Pancreas (tissue), 10 donors: ENCODE measurements at regions of chr1 and their contacts with region 1.

Region 1: DNA sequence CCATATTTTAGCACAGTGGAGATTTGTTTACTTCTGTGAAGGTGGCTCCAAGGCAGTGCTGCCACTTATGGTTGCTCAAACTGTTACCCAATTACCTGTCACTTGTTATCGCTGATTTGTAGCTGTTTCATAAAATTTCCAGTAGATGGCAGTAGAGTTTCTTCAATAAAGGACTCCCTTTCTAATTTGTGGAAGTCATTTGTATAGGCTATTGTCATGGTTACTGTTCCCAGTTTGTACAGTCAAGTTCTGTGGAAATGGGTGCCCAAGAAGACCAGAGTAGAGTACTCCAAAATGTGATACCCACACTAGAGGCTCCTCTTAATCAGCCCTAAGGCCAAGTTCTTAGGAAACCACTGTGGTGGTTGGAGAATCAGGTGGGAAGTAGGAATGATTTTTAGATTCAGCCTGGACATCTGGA is 186.1 kb downstream of the CLEC20A start:
- DNase-seq: peak in 2 of 6 donors; percentile 6 to 32
- ATAC-seq: peak; percentile 93 to 99 (median 94)
- H3K4me3 ChIP-seq: no peak overlapping the region
- H3K27ac ChIP-seq: no peak overlapping the region
- H3K4me1 ChIP-seq: peaks cover 0 to 7% (median 0%) of the 10 kb centered on the region in 3 donors
- H3K27me3 ChIP-seq: no peaks in the 10 kb centered on the region
- CTCF ChIP-seq: peak; percentile 45 to 72 (median 57)

Region 2: GRCh38 chr1:178501705-178502329 is 191.1 kb after region 1 on chr1:
- intact Hi-C with region 1: loop called in 2 of 3 experiments (anchors 5 to 10 kb)
- DNase-seq: peak; percentile 62 to 92 (median 81)
- ATAC-seq: peak; percentile 81 to 93 (median 88)
- H3K4me3 ChIP-seq: no peak overlapping the region
- H3K27ac ChIP-seq: no peak overlapping the region
- H3K4me1 ChIP-seq: no peaks in the 10 kb centered on the region
- H3K27me3 ChIP-seq: no peaks in the 10 kb centered on the region
- CTCF ChIP-seq: peak; percentile 87 to 95 (median 92)